Lower leg skin (tissue), 4 donors: ENCODE measurements at regions of chr14 and their contacts with region 1.

Region 1: DNA sequence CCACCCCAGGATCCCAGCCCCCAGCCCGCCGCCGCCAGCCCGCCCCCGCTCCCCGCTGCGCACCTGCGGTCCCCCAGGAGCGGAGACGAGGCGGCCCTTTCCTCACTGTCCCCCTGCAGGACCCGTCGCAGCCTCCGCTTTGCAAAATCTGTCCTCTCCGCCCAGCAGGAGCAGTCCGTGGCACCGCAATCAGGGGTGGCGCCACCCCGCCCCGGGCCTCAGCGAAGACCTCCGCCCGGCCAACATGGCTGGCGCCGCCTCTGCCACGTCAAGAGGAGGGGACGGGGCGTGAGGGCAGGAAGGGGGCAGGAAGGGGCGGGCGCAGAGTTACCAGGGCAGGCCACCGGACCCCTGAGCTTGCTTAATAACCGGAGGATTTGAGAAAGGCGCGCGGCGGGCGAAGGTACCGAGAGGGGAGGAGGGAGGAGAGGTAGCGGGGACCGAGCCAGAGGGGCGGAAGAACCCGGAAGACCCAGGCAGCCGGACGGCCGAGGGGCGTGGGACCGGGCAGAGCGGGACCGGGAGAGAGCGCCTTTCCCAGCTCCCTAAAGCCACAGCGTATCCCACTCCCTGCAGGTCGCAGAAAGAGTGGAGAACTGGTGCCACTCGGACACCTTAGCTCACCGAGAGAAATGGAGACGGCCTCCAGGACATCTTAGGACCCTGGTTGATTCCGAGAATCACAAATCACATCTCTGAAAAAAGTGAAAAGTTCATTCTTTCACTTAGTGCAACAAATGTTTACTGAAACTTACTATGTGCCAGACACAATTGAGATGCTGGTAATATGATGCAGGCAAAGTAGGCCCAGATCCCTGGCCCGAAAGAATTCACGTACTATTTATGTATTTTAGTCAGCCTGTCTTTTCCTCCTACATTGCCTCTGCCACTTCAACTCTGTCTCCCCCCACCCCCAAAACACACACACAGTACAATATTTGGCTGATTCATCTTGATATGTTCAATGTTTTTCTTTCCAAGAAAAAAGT is at the start of gene SEC23A:
- DNase-seq: peak; percentile 90 to 98
- H3K4me3 ChIP-seq: peak within 1 kb of the TSS; percentile 96
- CTCF ChIP-seq: peak in 1 of 3 donors; percentile 8
- POLR2A ChIP-seq: peak in 1 of 2 donors; percentile 45
- total RNA-seq, gene SEC23A: 24.4 to 64.4 (median 41.3) TPM

Region 2: DNA sequence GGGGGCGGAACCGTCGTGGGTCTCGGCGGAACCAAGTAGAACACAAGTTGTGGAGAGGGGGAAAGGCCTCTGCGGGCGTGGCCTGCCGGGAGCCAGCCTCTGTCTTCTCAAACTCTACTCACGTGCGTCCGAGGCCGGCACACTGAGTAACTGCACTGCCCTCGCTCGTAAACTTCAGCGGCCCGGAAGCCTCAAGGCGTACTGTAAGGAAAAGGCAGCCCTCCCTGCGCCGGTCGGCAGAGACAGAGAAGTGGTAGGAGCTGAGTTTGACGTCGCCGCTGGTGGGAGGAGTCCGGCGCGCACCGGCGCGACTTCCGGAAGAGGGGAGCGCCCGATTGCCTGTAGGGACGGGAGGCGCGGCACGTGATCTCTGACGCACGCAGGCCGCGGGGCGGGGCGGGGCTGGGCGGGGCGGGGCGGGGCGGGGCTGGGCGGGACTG is 328.9 kb after region 1 on chr14 and contains the start of gene FBXO33:
- intact Hi-C with region 1: loop called (anchors 10 kb)
- DNase-seq: peak; percentile 96 to 99
- H3K4me3 ChIP-seq: peak within 1 kb of the TSS; percentile 97
- CTCF ChIP-seq: peak in 1 of 3 donors; percentile 93
- POLR2A ChIP-seq: no peak
- total RNA-seq, gene FBXO33: 12.3 to 15.8 (median 13.1) TPM